ENCODE measurements at regions of chr10 and their contacts with region 1.

Region 1: GRCh38 chr10:26725837-26726727 is 28.6 kb downstream of the PDSS1 start:
- DNase-seq: peak; percentile 55
- ATAC-seq: no peak
- H3K4me3 Mint-ChIP-seq: no peak overlapping the region
- H3K27ac Mint-ChIP-seq: peak overlapping the region; percentile 28
- H3K4me1 Mint-ChIP-seq: peaks cover 18% of the 10 kb centered on the region
- H3K27me3 Mint-ChIP-seq: no peaks in the 10 kb centered on the region

Region 2: DNA sequence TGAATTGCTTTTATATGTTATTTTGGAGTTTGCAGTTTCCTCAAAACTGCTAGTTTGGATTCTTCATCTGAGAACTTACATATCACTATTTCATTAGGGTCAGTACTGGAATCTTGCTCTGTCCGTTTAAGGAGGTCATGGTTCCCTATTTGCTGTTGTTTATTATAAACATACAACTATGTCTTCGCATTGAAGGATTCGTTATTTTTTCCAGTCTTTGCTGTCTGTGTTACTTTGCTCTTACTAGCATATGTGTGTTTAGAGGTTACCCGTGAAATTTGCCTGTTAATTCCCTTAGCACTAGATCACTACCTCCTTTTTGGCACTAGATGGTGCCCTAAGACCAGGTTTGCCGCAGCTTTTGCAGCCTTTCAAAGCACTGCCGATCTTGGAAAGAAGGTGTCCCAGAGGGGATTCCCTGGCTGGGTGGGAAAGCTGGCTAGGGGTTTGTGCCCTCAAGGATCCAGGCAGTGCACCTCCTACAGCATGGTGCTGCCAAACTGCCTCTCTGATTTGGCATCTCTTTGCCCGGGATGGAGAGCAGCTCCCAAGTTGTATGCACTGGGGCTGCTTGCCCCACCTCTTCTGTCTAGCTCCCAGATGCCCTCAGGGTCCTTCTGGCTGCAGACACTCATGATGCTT is 391.0 kb before region 1 on chr10:
- CTCF ChIA-PET with region 1: interaction called, 14 read pairs
- DNase-seq: peak; percentile 76
- ATAC-seq: peak; percentile 91
- H3K4me3 Mint-ChIP-seq: peak overlapping the region; percentile 73
- H3K27ac Mint-ChIP-seq: peak overlapping the region; percentile 81
- H3K4me1 Mint-ChIP-seq: peaks cover 8% of the 10 kb centered on the region
- H3K27me3 Mint-ChIP-seq: no peaks in the 10 kb centered on the region

Region 3: DNA sequence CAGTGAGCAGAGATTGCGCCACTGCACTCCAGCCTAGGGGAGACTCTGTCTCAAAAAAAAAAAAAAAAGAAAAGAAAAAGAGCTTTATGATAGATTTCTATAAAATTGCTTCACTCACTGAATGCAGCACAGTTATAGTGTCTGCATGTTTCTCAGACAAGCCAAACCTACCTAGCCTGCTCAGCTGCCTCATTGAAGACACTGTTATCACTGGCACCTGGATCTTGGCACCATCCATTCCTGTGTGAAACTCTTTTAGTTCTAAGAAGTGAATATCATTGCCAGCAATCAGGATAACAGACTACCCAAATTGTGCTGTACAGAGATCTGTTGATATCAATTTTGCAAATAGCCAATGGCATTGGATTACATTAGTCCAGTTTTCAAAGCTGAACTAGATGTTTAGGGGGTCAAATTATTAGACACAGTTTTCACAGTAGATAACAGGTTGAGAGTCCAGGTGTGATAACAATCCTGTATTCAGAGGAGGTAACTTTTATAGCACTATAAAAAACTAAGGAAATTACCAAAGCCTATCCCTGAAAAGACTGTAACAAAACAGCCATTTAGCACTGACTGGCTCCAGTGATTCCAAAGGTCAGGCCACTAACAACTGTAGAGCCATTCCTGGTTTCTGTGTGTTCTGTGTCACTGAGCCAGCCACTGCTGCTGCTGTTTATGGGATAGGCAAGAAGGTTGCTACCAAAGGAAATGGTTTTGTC is 11.5 kb before region 1 on chr10:
- CTCF ChIA-PET with region 1: interaction called, 21 read pairs
- DNase-seq: no peak
- ATAC-seq: no peak
- H3K4me3 Mint-ChIP-seq: no peak overlapping the region
- H3K27ac Mint-ChIP-seq: peak overlapping the region; percentile 52
- H3K4me1 Mint-ChIP-seq: peaks cover 8% of the 10 kb centered on the region
- H3K27me3 Mint-ChIP-seq: no peaks in the 10 kb centered on the region

Region 4: GRCh38 chr10:26737730-26738129 is 11.6 kb after region 1 on chr10:
- CTCF ChIA-PET with region 1: interaction called, 27 read pairs
- DNase-seq: peak; percentile 76
- ATAC-seq: peak; percentile 80
- H3K4me3 Mint-ChIP-seq: peak overlapping the region; percentile 15
- H3K27ac Mint-ChIP-seq: peak overlapping the region; percentile 94
- H3K4me1 Mint-ChIP-seq: peaks cover 67% of the 10 kb centered on the region
- H3K27me3 Mint-ChIP-seq: no peaks in the 10 kb centered on the region

Region 5: GRCh38 chr10:26860443-26861204 is 134.5 kb after region 1 on chr10 and contains the start of gene ABI1:
- CTCF ChIA-PET with region 1: interaction called, 28 read pairs
- DNase-seq: peak; percentile 98
- ATAC-seq: peak; percentile 86
- H3K4me3 Mint-ChIP-seq: peak within 1 kb of the TSS; percentile 84
- H3K27ac Mint-ChIP-seq: peak within 1 kb of the TSS; percentile 99
- H3K4me1 Mint-ChIP-seq: peaks cover 29% of the 10 kb centered on the region
- H3K27me3 Mint-ChIP-seq: peaks cover 9% of the 10 kb centered on the region
- total RNA-seq, gene ABI1: 55.1 to 55.4 TPM

Region 6: GRCh38 chr10:26869528-26869927 is 143.4 kb after region 1 on chr10:
- CTCF ChIA-PET with region 1: interaction called, 11 read pairs
- DNase-seq: no peak
- ATAC-seq: peak; percentile 51
- H3K4me3 Mint-ChIP-seq: no peak overlapping the region
- H3K27ac Mint-ChIP-seq: no peak overlapping the region
- H3K4me1 Mint-ChIP-seq: peaks cover 15% of the 10 kb centered on the region
- H3K27me3 Mint-ChIP-seq: peaks cover 21% of the 10 kb centered on the region

Region 7: GRCh38 chr10:26881600-26882331 is 155.7 kb after region 1 on chr10:
- CTCF ChIA-PET with region 1: interaction called, 65 read pairs
- DNase-seq: no peak
- ATAC-seq: peak; percentile 76
- H3K4me3 Mint-ChIP-seq: no peak overlapping the region
- H3K27ac Mint-ChIP-seq: no peak overlapping the region
- H3K4me1 Mint-ChIP-seq: peaks cover 5% of the 10 kb centered on the region
- H3K27me3 Mint-ChIP-seq: peaks cover 35% of the 10 kb centered on the region

Region 8: DNA sequence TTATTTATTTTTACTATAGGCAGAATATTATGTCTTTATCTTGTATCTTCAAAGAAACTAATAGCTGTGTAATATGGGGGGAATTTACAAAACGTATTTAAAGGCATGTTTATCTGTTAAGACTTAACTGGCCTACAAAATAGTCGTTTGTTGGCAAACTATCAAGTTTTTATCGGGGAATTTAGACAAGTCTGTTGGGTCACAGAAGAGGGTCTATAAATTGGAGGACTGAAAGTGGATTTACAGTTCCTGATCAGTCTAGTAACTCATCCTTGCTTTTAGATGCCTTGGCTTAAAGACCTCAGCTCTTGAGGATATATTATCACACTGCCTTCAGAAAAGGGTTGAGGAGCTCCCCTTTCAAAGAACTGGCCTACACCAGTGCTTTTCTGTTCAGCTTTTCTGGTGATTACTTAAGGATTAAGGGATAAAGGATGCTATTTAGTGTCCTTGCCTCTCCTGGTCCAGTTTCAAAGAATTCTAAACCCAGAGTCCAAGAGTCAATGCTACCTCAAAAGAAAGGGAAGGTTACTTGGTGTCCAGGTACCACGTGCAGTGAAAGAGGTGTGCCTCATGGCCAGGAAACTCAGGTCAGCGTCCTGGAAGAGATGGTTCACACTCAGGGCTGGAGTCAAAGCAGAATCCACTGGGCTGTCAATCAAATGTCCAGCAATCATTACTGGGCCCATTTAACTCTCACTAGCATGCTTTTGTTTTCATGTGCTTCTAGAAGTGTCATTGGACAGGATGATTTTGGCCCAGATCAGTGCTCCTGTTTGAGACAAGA is 177.5 kb after region 1 on chr10:
- CTCF ChIA-PET with region 1: no interaction called
- DNase-seq: no peak
- ATAC-seq: no peak
- H3K4me3 Mint-ChIP-seq: no peak overlapping the region
- H3K27ac Mint-ChIP-seq: no peak overlapping the region
- H3K4me1 Mint-ChIP-seq: no peaks in the 10 kb centered on the region
- H3K27me3 Mint-ChIP-seq: peaks cover 17% of the 10 kb centered on the region